ENCODE measurements at regions of chr7 and their contacts with region 1.

Region 1: DNA sequence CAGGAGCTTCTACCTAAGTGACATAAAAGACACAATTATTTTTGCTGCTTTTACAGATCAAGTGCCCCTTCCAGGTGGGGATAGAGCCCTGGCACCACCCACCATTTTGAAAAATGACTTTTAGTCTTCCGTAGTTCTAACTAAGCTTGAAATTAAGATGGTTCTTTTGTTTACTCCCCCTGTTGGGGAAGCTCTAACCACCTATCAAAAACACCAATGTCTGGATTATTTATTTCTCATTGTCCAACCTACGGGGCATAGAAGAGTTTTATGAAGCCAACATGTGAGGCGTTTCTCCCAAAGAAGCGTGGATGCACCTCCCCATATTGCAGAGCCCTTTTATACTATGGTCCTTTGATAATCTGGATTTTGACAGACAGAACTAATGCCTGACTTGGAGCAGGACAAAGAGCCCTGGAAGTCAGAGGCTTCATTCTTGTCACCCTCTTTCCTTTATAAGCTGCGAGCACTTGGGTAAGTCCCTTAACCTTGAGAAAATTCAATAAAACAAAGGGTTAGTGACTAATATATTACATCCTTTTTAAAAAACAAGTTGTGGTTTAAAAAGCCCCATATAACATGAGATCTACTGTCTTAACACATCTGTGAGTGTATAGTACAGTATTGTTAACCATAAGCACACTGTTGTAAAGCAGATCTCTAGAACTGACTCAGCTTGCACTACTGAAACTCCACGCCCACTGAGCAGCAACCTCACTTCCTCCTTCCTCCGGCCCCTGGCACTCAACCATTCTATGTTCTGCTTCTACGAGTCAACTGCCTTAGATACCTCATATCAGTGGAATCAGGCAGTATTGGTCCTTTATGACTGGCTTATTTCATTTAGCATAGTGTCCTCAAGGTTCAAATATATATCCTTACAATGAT is 67.5 kb downstream of the ATXN7L1 start:
- DNase-seq: peak; percentile 94
- ATAC-seq: peak; percentile 82
- H3K4me3 Mint-ChIP-seq: peak overlapping the region; percentile 16
- H3K27ac Mint-ChIP-seq: peak overlapping the region; percentile 71
- H3K4me1 Mint-ChIP-seq: peaks cover 59% of the 10 kb centered on the region
- H3K27me3 Mint-ChIP-seq: peaks cover 8% of the 10 kb centered on the region

Region 2: DNA sequence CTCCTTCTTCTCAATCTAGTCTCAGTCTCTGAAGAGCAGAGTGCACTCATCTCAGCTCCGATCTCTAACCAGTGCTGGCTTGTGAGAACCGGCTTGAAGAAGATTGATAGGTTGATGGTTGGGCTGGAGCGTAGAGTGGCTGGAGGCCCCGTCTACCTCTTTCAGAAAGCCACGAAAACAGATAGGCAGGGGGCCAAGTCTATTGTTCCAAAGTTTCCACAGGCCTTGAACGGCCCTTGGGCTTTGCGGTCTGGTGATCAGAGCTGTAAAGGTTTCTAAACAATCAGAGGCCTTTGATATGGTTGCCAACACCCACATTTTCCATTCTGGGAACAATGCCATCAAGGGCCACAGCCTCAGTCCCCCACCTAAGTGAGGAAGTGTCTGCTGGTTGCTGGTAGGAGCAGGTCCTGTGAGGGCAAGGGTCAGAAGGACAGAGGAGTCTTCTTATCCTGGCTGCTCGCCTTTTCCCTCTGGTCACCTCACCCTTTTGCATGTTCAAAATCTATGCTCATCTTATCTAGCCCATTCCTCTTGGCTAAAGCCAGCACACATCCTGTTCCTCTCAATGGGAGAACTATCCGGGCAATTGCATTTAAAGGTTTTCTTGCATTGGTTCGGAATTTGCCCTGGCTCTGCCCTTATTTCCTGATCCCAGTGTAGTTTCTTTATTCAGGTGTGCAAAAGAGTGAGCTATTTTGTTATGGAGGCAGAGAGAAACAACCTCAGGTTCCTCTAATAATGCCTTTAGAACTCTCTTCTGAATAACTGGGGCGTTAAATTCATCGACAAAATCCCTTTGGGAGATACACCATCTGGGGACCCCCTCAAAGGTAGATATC is 865.2 kb before region 1 on chr7:
- CTCF ChIA-PET with region 1: no interaction called
- POLR2A ChIA-PET with region 1: no interaction called
- intact Hi-C with region 1: loop called in 1 of 2 experiments (anchors 5 kb)
- DNase-seq: peak; percentile 87
- ATAC-seq: peak; percentile 68
- H3K4me3 Mint-ChIP-seq: peak overlapping the region; percentile 95
- H3K27ac Mint-ChIP-seq: peak overlapping the region; percentile 99
- H3K4me1 Mint-ChIP-seq: peaks cover 68% of the 10 kb centered on the region
- H3K27me3 Mint-ChIP-seq: no peaks in the 10 kb centered on the region

Region 3: GRCh38 chr7:105691733-105692564 is 117.0 kb before region 1 on chr7:
- CTCF ChIA-PET with region 1: no interaction called
- POLR2A ChIA-PET with region 1: no interaction called
- intact Hi-C with region 1: loop called in 1 of 2 experiments (anchors 1 kb)
- DNase-seq: peak; percentile 71
- ATAC-seq: peak; percentile 53
- H3K4me3 Mint-ChIP-seq: peak overlapping the region; percentile 76
- H3K27ac Mint-ChIP-seq: peak overlapping the region; percentile 93
- H3K4me1 Mint-ChIP-seq: peaks cover 43% of the 10 kb centered on the region
- H3K27me3 Mint-ChIP-seq: no peaks in the 10 kb centered on the region

Region 4: DNA sequence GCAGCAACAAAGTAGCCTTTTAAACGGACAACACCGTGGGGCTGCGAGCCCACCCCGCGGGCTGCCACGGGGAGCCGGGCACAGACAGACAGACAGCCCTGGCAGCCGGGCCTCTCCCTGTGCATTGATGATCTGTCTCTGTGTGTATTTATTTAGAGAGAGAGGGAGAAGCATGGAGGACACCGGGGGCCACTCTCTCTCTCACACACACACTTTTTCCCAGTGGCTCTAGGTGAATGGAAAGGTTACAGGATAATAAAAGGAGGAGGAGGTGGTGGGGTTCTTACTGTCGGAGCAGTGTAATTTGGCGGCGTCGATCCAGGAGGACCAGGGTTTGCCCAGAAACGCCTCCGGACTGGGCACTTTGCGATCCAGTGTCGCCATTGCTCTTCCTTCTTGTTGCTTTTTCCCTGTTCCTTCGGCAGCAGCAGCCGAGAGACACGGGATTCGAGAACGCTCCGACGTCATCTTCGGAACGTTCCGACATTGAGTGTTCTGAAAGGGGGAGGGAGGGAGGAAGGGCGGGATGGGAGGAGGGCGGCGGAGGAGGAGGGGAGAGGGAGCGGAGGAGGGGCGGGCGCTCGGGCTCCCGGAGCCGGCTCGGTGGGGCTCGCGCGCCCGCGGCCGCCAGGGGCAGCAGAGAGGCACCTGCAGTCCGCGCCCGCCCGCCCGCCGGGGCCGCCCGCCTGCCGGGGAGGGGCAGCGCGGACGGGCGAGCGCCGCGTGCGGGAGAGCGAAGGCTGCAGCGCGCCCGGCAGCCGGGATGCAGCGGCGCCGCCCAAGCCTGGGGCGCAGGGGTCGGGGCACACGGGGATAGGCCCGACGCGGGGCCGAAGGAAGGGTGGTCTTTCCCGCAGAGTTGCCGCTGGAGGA is 67.4 kb after region 1 on chr7 and contains the start of gene ATXN7L1:
- CTCF ChIA-PET with region 1: interaction called, 6 read pairs
- POLR2A ChIA-PET with region 1: interaction called, 4 read pairs
- intact Hi-C with region 1: loop called (anchors 1 kb)
- DNase-seq: peak; percentile 96
- ATAC-seq: peak; percentile 85
- H3K4me3 Mint-ChIP-seq: peak within 1 kb of the TSS; percentile 82
- H3K27ac Mint-ChIP-seq: peak within 1 kb of the TSS; percentile 77
- H3K4me1 Mint-ChIP-seq: peaks cover 65% of the 10 kb centered on the region
- H3K27me3 Mint-ChIP-seq: peaks cover 3% of the 10 kb centered on the region
- total RNA-seq, gene ATXN7L1: 11.2 to 16.9 TPM

Region 5: DNA sequence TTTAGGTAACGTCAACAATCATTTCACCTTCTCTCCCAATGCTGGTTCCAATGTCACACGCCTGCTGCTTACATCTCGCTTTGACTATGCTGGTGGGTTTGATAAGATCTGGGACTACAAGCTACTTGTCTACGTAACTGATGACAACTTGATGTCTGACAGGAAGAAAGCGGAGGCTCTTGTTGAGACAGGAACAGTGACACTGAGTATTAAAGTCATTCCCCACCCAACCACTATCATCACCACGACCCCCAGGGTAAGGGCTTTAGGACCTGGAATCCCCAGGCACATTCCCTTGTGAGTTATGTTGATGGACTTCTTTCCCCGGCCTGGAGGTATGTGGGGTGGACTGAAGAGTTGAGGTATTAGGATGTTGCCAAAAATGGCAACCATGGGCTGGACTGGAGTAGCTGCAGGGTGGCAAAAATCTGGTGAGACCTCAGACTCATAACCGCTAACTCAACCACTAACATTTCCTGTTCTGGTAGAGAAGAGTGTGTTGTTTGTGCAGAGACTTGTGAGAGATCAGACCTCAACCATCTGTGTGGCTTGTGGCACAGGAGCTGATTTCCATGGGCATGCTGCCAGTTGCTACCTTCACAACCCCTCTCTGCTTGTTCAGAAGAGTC is 213.4 kb after region 1 on chr7:
- CTCF ChIA-PET with region 1: interaction called, 3 read pairs
- POLR2A ChIA-PET with region 1: interaction called, 4 read pairs
- intact Hi-C with region 1: loop called (anchors 1 kb)
- DNase-seq: peak; percentile 82
- ATAC-seq: peak; percentile 87
- H3K4me3 Mint-ChIP-seq: peak overlapping the region; percentile 19
- H3K27ac Mint-ChIP-seq: peak overlapping the region; percentile 84
- H3K4me1 Mint-ChIP-seq: peaks cover 57% of the 10 kb centered on the region
- H3K27me3 Mint-ChIP-seq: no peaks in the 10 kb centered on the region

Region 6: DNA sequence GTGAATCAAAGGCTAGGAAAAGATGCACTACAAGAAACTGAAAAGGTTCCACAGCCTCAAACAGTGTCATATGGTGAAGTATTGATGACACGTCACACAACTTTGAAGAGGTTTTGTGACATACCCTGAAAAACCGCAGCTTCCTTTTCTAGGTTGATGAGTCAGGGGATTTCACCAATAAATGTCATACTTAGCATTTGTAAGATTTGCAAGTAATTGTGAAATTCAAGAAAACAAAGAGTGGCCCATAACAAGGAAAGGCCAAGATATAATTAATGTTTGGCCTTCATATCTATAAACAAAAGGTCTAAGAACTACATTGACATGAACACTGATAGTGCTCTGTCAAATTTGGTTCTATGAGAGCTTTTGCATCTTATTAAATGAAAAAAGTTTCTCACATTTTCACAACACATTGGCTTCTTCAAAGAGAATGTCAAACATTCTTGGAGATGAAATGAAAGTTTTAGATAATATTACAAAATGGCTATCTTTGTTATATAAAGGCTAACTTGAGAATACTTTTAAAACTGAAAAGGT is 537.8 kb after region 1 on chr7:
- CTCF ChIA-PET with region 1: no interaction called
- POLR2A ChIA-PET with region 1: no interaction called
- intact Hi-C with region 1: loop called in 1 of 2 experiments (anchors 1 kb)
- DNase-seq: peak; percentile 65
- ATAC-seq: peak; percentile 73
- H3K4me3 Mint-ChIP-seq: peak overlapping the region; percentile 66
- H3K27ac Mint-ChIP-seq: peak overlapping the region; percentile 100
- H3K4me1 Mint-ChIP-seq: peaks cover 54% of the 10 kb centered on the region
- H3K27me3 Mint-ChIP-seq: peaks cover 12% of the 10 kb centered on the region

Measured in activated CD4-positive, alpha-beta T cell treated with anti-CD3 and anti-CD28 coated beads for 36 hours (primary cell).